MCF 10A (cell line): ENCODE measurements at regions of chr4 and their contacts with region 1.

Region 1: DNA sequence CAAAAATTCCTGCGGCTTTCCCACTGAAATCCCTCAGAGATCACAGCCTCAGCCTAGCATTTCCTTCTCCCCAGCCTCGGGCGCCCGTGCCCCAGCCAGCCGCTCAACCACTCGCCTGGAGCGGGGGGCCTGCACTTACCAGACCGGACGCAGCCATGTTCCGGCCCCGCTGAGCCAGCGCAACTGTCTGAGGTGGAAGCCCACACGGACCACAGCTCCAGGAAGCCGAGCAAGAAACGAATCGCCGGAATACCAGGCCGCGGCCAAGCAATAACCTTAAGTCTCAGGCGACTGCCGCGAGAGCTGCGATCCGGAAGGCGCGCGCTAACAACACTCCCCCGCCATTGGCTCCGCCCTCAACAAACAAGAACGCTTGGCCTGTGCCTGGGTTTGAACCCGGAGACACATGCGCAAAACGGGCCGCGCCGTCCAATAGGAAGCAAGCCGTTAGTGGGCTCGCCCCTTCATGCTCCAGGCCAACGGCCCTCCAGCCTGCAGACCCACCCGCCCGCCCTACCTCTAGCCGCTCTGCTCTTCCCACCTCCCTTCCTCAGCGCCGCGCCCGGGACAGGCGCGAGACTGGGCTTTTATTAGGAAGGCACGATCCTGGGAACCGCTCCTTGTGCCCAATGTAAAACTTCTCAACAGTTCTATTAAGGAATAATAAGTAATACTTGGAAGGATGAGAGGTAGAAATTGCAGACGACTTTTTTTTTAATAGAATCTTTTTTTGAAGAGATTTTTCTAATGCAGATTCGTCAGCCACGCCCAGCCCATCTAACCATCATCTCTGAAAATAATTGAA is at the start of gene CENPC:
- DNase-seq: peak; percentile 98
- H3K4me3 Mint-ChIP-seq: peak within 1 kb of the TSS; percentile 94
- H3K27ac Mint-ChIP-seq: peak within 1 kb of the TSS; percentile 99
- H3K4me1 Mint-ChIP-seq: peaks cover 23% of the 10 kb centered on the region
- H3K27me3 Mint-ChIP-seq: no peaks in the 10 kb centered on the region
- CTCF ChIP-seq: no peak
- total RNA-seq, gene CENPC: 17.7 and 19.0 TPM in 2 replicates

Region 2: GRCh38 chr4:67624939-67625338 is 79.5 kb after region 1 on chr4:
- CTCF ChIA-PET with region 1: interaction called, 4 read pairs
- POLR2A ChIA-PET with region 1: interaction called, 3 read pairs
- intact Hi-C with region 1: loop called (anchors 1 kb)
- DNase-seq: no peak
- H3K4me3 Mint-ChIP-seq: no peak overlapping the region
- H3K27ac Mint-ChIP-seq: no peak overlapping the region
- H3K4me1 Mint-ChIP-seq: no peaks in the 10 kb centered on the region
- H3K27me3 Mint-ChIP-seq: no peaks in the 10 kb centered on the region
- CTCF ChIP-seq: no peak

Region 3: DNA sequence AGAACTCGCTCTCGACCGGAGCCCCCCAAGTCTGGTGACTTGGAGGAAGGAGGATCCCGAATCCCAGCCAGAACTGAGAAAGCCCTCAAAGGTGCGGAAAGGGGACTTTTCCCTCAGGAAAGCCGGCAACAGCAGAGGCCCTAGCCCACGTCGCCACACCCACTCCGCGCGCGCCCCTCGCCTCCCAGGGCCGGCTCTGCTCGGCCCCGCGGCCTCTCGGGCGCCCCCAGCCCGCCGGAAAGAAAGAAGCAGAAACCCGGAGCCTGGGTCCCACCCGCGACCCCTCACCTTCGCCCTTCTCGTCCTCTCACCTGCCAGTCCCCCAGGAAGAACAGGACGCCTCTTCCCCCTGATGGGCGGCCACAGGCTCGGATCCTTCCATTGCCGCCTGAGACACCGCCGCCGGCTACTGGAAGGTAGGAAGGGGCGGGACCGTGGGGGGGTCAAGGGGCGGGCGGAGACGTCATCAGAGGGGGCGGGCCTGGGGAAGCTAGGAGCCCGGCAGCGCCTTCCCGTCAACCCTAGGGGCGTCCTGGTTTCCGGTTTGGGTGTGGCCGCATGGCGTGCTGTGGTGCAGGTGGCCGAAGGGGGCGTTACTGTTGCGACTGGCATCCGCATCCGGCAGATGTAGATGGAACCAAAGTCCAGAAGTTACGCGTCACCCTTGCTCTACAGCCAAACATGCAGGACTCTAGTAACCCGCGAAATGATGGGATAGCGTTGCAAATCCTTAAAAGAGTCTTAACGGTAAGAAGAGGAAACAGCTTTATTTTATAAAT is 155.5 kb after region 1 on chr4 and contains the start of gene UBA6:
- CTCF ChIA-PET with region 1: interaction called, 5 read pairs
- POLR2A ChIA-PET with region 1: interaction called, 7 read pairs
- intact Hi-C with region 1: loop called (anchors 1 kb)
- DNase-seq: peak; percentile 97
- H3K4me3 Mint-ChIP-seq: peak within 1 kb of the TSS; percentile 85
- H3K27ac Mint-ChIP-seq: peak within 1 kb of the TSS; percentile 95
- H3K4me1 Mint-ChIP-seq: peaks cover 26% of the 10 kb centered on the region
- H3K27me3 Mint-ChIP-seq: no peaks in the 10 kb centered on the region
- CTCF ChIP-seq: peak; percentile 40
- total RNA-seq, gene UBA6: 83.1 and 97.4 TPM in 2 replicates

Region 4: DNA sequence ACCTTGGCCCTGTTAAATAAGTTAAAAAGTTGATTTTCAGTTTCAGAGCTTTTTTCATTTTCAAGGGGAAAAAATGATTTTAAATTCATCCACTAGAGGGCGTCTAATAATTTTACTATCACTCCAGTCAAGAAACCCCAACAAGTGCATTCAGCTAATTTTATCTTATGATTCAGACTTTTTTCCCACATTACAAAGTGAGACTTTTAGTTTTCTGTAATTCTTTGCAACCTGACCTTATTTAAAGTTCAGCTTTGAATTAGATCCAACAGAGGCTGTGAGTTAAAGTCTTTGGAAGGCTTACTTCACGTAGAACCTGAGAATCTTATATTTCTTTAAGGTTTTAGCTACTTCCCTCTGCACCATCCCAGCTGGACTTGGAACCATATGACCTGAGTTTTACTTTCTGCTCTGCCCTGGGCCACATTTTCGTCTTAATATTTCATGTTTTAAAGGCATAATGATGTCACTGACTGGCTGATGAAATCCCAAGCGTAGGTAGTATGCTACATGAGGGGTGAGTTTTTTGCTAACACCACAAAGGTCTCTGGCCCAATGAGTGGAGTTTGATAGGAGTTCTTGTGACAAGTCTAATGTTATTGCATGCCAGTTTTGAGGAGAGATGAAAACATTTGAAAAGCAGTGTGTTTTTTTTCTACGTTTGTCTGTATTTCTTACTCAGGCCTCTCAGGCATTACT is 201.5 kb after region 1 on chr4:
- CTCF ChIA-PET with region 1: interaction called, 3 read pairs
- POLR2A ChIA-PET with region 1: no interaction called
- intact Hi-C with region 1: loop called (anchors 5 kb)
- DNase-seq: peak; percentile 39
- H3K4me3 Mint-ChIP-seq: no peak overlapping the region
- H3K27ac Mint-ChIP-seq: no peak overlapping the region
- H3K4me1 Mint-ChIP-seq: peaks cover 10% of the 10 kb centered on the region
- H3K27me3 Mint-ChIP-seq: no peaks in the 10 kb centered on the region
- CTCF ChIP-seq: peak; percentile 48

Region 5: DNA sequence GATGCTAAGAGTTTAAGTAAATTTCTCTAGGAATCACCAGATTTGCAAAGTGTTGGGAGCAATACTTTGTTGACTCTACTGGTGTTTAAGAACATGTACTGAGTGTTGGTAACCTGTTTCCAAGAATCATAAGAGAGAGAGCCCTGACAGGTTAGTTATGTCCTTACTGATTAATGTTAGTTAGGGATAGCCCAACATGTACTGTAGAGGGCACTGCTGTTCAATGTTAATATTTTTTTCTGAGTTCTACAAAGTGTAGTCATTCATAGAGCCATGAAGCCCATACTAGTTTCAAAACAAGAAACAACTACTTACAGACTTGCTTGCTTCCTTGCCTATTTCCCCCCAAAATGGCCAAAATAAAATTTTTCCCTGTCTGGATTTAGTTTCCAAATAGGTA is 326.5 kb after region 1 on chr4:
- CTCF ChIA-PET with region 1: no interaction called
- POLR2A ChIA-PET with region 1: no interaction called
- intact Hi-C with region 1: loop called (anchors 5 kb)
- DNase-seq: peak; percentile 55
- H3K4me3 Mint-ChIP-seq: no peak overlapping the region
- H3K27ac Mint-ChIP-seq: no peak overlapping the region
- H3K4me1 Mint-ChIP-seq: peaks cover 4% of the 10 kb centered on the region
- H3K27me3 Mint-ChIP-seq: no peaks in the 10 kb centered on the region
- CTCF ChIP-seq: peak; percentile 55

Region 6: DNA sequence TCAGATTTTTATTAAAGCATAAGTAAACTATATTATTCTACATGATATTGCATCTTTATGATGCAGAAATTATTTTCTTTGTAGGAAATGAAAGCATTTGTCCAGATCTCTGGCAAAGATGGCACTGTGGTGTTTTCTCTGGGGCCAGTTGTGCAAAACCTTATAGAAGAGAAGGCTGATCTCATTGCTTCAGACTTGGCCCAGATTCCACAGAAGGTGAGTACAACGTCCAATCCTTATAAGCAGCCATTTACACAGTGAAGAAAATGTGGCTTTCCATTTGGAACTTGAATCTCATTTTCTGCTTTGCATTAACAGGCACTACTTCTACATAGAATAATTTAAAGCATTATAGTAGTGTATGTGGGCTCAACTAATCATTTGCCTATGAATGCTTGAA is 1544.0 kb after region 1 on chr4:
- CTCF ChIA-PET with region 1: no interaction called
- POLR2A ChIA-PET with region 1: no interaction called
- intact Hi-C with region 1: no loop called
- DNase-seq: no peak
- H3K4me3 Mint-ChIP-seq: no peak overlapping the region
- H3K27ac Mint-ChIP-seq: no peak overlapping the region
- H3K4me1 Mint-ChIP-seq: no peaks in the 10 kb centered on the region
- H3K27me3 Mint-ChIP-seq: no peaks in the 10 kb centered on the region
- CTCF ChIP-seq: no peak